Ovary (tissue), 10 donors: ENCODE measurements at regions of chr1 and their contacts with region 1.

Region 1: DNA sequence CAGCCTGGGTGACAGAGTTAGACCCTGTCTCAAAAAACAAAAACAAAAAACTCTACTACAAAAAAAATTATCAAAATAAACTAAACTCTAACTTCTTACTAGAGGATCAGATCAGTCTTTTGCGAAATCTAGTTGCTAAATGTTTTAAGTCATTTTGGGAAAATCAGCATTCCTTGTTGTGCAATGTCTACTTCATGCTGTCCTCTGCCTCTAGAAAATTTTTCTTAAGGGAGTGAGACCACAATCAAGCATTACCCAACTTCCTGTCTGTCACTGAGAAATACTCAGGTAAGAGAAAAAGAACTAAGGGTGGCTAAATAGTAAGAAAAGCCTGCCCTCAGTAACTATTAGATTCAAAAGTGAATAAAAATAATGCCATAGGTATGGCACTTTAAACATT is 67.2 kb upstream of the FOXD3 start:
- DNase-seq: no peak
- H3K4me3 ChIP-seq: no peak overlapping the region
- H3K27ac ChIP-seq: no peak overlapping the region
- H3K4me1 ChIP-seq: no peaks in the 10 kb centered on the region
- H3K27me3 ChIP-seq: no peaks in the 10 kb centered on the region
- CTCF ChIP-seq: no peak
- EP300 ChIP-seq: no peak
- POLR2A ChIP-seq: no peak

Region 2: DNA sequence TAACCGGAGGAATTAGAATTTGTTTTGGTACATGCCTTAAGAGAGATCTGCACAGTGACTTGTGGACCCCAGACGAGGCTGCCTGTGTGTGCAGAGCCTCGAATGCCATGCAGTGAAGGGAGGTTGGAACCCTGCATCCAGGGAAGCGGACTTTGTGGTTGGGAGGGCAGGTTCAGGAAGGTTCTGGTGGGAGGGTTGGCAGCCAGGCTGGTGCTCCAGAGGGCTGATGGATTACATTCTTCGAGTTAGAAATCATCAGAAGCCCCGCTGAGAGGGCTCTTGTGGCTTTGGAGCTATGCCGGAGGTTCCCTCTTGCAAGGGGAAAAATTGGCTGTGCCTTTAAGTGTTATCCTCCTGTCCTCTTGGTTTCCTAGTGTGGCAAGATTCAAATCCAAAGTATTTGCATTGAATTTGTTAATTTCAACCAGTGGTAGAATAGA is 539.8 kb after region 1 on chr1:
- intact Hi-C with region 1: loop called in 1 of 4 experiments (anchors 5 kb)
- DNase-seq: no peak
- H3K4me3 ChIP-seq: no peak overlapping the region
- H3K27ac ChIP-seq: no peak overlapping the region
- H3K4me1 ChIP-seq: peaks cover 2% of the 10 kb centered on the region
- H3K27me3 ChIP-seq: no peaks in the 10 kb centered on the region
- CTCF ChIP-seq: no peak
- EP300 ChIP-seq: no peak
- POLR2A ChIP-seq: no peak

Region 3: DNA sequence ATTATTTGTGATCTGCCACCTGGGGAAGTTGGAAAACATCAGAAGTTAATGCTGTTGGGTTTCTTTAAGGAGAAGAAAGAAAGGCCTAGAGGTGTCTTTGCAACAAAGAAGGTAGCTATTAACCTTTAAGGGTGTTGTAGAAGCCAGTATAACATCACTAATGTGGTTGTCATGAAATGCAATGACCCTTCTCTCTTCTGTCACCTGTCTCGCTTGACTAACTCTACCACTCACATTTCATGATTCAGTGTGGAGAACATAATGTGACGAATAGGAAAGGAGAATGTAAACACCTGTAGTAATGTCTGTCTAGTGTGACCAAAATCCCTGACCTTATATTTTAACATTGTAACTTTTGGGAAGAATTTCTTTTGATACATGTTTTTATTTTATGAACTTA is 736.5 kb after region 1 on chr1:
- intact Hi-C with region 1: loop called in 1 of 4 experiments (anchors 5 kb)
- DNase-seq: no peak
- H3K4me3 ChIP-seq: no peak overlapping the region
- H3K27ac ChIP-seq: no peak overlapping the region
- H3K4me1 ChIP-seq: no peaks in the 10 kb centered on the region
- H3K27me3 ChIP-seq: no peaks in the 10 kb centered on the region
- CTCF ChIP-seq: no peak
- EP300 ChIP-seq: no peak
- POLR2A ChIP-seq: no peak